SK-N-SH (cell line): ENCODE measurements at regions of chr17 and their contacts with region 1.

Region 1: GRCh38 chr17:63773381-63774140 is at the start of gene CCDC47:
- DNase-seq: peak; percentile 100
- H3K4me3 ChIP-seq: peak within 1 kb of the TSS; percentile 82 to 88
- H3K27ac ChIP-seq: peak within 1 kb of the TSS; percentile 100
- H3K4me1 ChIP-seq: peaks cover 0 to 9% of the 10 kb centered on the region in 2 experiments; a peak in 2 of 4 replicates
- H3K27me3 ChIP-seq: no peaks in the 10 kb centered on the region
- CTCF ChIP-seq: no peak
- EP300 ChIP-seq: peak in 1 of 2 experiments; percentile 40; a peak in 2 of 4 replicates
- RAD21 ChIP-seq: no peak
- polyA plus RNA-seq, gene CCDC47: 76.6 and 90.7 TPM in 2 replicates

Region 2: DNA sequence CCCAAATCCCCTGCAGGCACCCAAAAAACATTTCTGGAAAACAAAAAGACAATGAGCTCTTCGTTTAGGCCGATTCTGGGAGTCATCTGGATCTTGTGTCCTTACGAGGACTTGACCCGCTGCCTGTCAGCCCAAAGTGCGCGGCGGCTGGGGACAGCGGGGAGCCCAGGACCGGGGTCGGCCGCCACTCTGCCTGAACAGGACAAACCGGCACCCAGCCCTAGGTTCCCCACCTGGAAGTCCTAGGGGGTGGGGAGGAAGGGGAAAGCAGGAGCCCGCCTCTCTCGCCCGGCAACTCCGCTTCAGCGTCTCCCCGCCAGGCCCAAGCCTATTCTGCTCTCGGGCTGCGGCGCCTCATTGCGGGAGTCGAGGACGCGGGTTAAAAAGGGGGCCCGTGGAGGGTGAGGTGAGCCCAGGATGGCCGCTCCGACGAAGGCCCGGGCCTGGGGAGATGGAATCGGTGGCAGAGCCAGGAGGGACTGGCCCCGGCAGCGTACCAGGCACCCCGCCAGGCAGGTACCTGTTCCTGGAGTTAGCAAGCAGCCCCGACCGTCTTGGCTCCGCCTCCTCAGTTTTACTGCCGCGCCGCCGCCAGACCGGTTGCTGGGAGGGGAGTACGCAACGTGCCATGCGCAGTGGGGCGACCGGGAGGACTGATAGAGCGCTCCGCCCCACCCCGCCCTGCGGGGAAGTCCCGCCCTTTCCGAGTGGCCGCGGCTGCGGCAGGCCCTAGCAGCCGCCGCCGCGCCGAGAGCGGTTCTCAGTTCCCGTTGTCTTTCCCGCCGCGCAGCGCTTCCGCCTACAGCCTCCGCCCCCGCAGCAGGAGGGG is 32.1 kb before region 1 on chr17 and contains the start of gene STRADA:
- CTCF ChIA-PET with region 1: interaction called, 4 read pairs
- POLR2A ChIA-PET with region 1: interaction called, 15 read pairs
- DNase-seq: peak; percentile 100
- H3K4me3 ChIP-seq: peak within 1 kb of the TSS; percentile 77 to 83
- H3K27ac ChIP-seq: peak within 1 kb of the TSS; percentile 75 to 98
- H3K4me1 ChIP-seq: peaks cover 5 to 6% of the 10 kb centered on the region in 2 experiments; a peak in 3 of 4 replicates
- H3K27me3 ChIP-seq: no peaks in the 10 kb centered on the region
- CTCF ChIP-seq: no peak
- EP300 ChIP-seq: peak in 1 of 2 experiments; percentile 54; a peak in 3 of 4 replicates
- RAD21 ChIP-seq: peak; percentile 13; the same call in 1 of the 2 replicates
- polyA plus RNA-seq, gene STRADA: 37.3 and 45.0 TPM in 2 replicates

Region 3: DNA sequence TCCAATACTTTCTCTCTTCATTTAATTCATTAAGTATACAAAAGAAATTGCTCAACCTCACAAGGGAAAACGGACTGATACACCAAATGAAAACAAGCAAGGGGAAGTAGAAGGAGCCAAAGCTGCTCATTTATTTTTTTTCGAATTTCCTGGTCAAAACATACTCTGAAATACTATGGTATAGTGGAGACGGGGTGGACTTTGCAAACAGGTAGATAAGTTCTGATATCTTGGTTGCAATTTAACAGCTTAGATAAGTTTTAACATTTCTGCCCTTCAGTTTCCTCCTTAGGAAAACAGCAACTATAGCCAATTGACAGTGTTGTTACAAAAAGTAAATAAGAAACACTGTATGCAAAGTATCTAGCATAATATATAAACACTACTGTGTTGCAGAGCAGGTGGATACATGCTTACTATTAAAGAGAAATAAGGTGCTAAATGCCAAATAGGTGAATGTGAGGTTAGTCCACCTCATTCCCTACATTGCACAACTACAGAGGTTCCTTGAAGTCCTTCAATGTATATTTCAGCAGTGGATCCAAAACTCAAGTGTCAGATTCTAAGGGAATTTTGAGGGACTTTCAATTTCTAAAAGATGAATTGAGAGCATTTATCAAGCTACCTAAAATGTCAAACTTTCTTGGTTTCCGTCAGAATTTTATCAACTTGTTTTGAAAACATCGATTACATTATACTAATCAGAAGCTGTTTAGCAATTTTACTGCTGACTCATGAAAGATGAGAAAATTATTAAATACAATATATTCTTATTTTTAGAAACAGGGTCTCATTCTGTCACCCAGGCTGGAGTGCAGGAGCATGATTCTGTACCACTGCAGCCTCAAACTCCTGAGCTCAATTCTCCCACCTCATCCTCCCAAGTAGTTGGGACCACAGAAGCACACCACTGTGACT is 11.1 kb before region 1 on chr17:
- CTCF ChIA-PET with region 1: interaction called, 17 read pairs
- POLR2A ChIA-PET with region 1: interaction called, 5 read pairs
- DNase-seq: no peak
- H3K4me3 ChIP-seq: no peak overlapping the region
- H3K27ac ChIP-seq: no peak overlapping the region
- H3K4me1 ChIP-seq: no peaks in the 10 kb centered on the region
- H3K27me3 ChIP-seq: no peaks in the 10 kb centered on the region
- CTCF ChIP-seq: no peak
- EP300 ChIP-seq: no peak
- RAD21 ChIP-seq: no peak

Region 4: GRCh38 chr17:63785556-63785955 is 12.0 kb after region 1 on chr17:
- CTCF ChIA-PET with region 1: interaction called, 26 read pairs
- POLR2A ChIA-PET with region 1: interaction called, 7 read pairs
- DNase-seq: no peak
- H3K4me3 ChIP-seq: no peak overlapping the region
- H3K27ac ChIP-seq: peak overlapping the region in 1 of 2 experiments; percentile 60; a peak in 2 of 4 replicates
- H3K4me1 ChIP-seq: peaks cover 0 to 19% of the 10 kb centered on the region in 2 experiments; a peak in 3 of 4 replicates
- H3K27me3 ChIP-seq: no peaks in the 10 kb centered on the region
- CTCF ChIP-seq: no peak
- EP300 ChIP-seq: no peak
- RAD21 ChIP-seq: no peak

Region 5: DNA sequence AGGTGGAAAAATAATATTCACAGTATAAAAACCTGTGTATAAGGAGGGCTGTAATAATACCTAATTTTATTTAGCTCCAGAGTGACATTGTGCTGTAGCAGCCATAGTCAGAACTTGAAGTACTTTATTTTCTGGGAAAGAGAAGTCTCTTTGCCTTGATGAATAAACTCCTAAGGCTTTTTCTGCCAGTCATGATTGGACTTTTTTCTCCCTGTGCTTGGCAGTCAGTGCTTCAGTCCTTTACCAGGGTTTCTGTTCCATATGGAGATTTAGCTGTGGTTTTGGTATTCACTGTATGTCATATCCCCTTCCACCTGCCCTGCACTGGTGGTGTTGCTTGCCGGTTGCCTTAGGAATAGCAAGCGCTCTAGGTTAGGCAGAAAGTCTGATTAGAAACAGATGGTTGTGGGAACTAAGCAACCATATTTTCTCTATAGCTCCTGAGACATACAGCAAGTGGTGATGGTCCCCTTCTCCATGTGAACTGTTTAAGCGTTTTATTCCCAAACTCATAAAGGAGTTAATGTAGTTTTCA is 25.1 kb after region 1 on chr17:
- CTCF ChIA-PET with region 1: interaction called, 12 read pairs
- POLR2A ChIA-PET with region 1: interaction called, 8 read pairs
- DNase-seq: no peak
- H3K4me3 ChIP-seq: no peak overlapping the region
- H3K27ac ChIP-seq: peak overlapping the region; percentile 5 to 17; a peak in 2 of 4 replicates
- H3K4me1 ChIP-seq: peaks cover 0 to 5% of the 10 kb centered on the region in 2 experiments; a peak in 2 of 4 replicates
- H3K27me3 ChIP-seq: no peaks in the 10 kb centered on the region
- CTCF ChIP-seq: no peak
- EP300 ChIP-seq: no peak
- RAD21 ChIP-seq: no peak

Region 6: DNA sequence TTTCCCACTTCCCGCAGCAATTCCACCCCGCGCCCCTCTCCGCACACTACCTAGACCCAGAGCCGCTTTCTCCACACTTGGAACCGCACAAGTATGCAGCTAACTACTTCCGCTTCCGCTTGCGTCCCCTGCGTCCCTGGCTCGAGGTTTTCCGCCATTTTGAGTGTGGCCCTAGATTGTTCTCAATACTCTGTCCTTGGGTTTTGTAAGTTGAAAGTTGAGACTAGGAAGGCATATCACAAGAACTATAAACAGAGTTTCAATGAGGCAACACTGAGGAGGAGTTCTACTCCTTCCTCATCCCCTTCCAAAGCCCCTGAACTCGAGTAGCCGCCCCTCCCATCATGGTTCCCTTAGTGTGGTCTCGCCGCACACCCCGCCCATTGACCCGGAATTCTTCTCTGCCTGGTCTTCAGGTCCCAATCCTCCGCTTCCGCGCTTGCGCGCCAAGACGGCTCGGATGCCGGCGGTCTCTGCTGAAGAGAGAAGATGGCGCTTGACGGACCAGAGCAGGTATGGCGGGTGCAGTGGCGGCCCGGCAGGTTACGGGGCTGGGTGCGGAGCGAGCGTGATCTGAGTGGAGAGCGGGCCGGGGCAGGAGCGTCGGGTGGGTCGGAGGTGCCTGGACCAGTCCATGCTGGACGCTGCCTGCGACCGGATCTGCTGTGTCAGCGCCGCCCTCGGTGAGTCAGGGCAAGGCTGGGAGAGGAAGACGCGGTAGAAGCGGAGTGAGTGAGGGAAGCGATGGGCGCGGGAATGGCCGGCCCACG is 53.6 kb after region 1 on chr17 and contains the starts of genes FTSJ3 and PSMC5:
- CTCF ChIA-PET with region 1: interaction called, 8 read pairs
- POLR2A ChIA-PET with region 1: interaction called, 14 read pairs
- DNase-seq: peak; percentile 95
- H3K4me3 ChIP-seq: peak within 1 kb of the TSS; percentile 94 to 100
- H3K27ac ChIP-seq: peak within 1 kb of the TSS; percentile 90 to 99
- H3K4me1 ChIP-seq: peaks cover 9 to 37% of the 10 kb centered on the region in 2 experiments; a peak in 2 of 4 replicates
- H3K27me3 ChIP-seq: no peaks in the 10 kb centered on the region
- CTCF ChIP-seq: peak; percentile 56
- EP300 ChIP-seq: no peak; a peak in 1 of 4 replicates
- RAD21 ChIP-seq: no peak
- polyA plus RNA-seq, gene FTSJ3: 148 and 180 TPM in 2 replicates
- polyA plus RNA-seq, gene PSMC5: 424 and 468 TPM in 2 replicates